GM12878 (cell line): ENCODE measurements at regions of chr2 and their contacts with region 1.

Region 1: DNA sequence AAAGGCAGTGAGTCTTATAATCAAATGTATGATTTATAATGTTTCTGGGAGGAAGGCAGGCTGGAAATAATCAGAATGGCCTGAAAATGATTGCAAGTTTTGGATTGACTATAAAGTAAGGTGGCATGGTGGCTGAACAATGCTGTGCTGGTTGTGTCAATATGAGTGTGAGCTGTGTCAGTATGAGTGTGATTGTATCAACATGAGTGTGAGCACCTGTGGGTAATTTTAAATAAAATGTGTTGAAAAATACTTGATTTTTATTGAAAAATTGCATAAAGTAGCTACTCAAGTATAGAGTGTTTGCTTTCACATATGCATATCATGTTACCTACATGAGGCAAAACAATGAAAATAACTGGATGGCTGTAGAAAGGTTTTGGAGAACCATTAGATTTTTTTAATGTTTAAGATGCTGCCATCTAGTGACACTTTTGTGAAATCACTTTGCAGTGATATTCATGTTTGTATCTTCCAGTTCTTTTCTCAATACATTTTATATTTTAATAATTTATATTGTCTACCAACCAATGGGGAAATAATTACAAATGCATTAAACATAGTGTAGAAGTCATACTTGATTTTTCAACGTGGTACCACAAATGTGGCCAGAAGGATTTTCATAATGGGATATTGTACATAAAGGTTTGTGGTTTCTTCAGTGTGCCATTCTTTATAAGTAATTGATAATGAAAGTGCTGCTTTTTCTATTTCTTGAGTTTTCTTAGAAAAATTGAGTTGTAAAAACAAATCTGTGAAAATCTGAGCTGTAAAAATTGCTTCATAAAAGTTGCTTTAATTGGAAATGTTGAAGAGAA is 103.3 kb downstream of the KYNU start:
- DNase-seq: no peak
- ATAC-seq: peak; percentile 58
- H3K4me3 ChIP-seq: no peak overlapping the region
- H3K27ac ChIP-seq: no peak overlapping the region
- H3K4me1 ChIP-seq: peaks cover 19% of the 10 kb centered on the region
- H3K27me3 ChIP-seq: no peaks in the 10 kb centered on the region
- CTCF ChIP-seq: peak; percentile 42 to 66 (median 43); a peak in 5 of 6 replicates
- EP300 ChIP-seq: no peak
- POLR2A ChIP-seq: no peak
- RAD21 ChIP-seq: peak; percentile 68

Region 2: GRCh38 chr2:142682528-142682927 is 298.2 kb before region 1 on chr2:
- CTCF ChIA-PET with region 1: interaction called, 41 read pairs
- POLR2A ChIA-PET with region 1: no interaction called
- RAD21 ChIA-PET with region 1: interaction called, 11 read pairs
- SMC1A ChIA-PET with region 1: interaction called, 22 read pairs
- in situ Hi-C with region 1: no loop called
- intact Hi-C with region 1: loop called (anchors 2 kb)
- DNase-seq: no peak
- ATAC-seq: peak; percentile 39; the same call in 2 of the 3 replicates
- H3K4me3 ChIP-seq: no peak overlapping the region
- H3K27ac ChIP-seq: no peak overlapping the region
- H3K4me1 ChIP-seq: no peaks in the 10 kb centered on the region
- H3K27me3 ChIP-seq: peaks cover 0 to 4% of the 10 kb centered on the region in 2 experiments; a peak in 1 of 4 replicates
- CTCF ChIP-seq: peak in 1 of 3 experiments; percentile 36; a peak in 1 of 6 replicates
- EP300 ChIP-seq: no peak
- POLR2A ChIP-seq: no peak
- RAD21 ChIP-seq: peak; percentile 79

Region 3: DNA sequence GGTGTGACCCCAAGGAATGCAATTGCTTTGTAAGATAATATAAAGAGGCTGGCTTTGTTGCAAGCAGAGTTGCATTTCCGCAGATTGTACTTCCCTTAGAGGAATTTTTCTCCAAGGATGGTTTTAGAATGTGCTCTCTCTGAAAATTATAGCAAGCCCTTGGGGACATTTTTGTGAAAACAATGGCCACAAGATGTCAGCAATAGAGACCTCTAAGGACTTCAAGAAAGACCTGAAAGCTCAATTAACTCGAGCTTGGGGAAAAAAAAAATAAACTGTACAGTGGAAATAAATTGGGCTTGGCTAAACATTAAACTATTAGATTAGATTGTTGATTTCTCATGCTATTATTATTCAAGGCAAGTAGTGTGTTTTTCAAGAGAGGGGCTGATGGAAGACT is 184.6 kb before region 1 on chr2:
- CTCF ChIA-PET with region 1: interaction called, 56 read pairs
- POLR2A ChIA-PET with region 1: no interaction called
- RAD21 ChIA-PET with region 1: interaction called, 21 read pairs
- SMC1A ChIA-PET with region 1: interaction called, 47 read pairs
- in situ Hi-C with region 1: no loop called
- intact Hi-C with region 1: loop called (anchors 2 kb)
- DNase-seq: no peak
- ATAC-seq: peak; percentile 30; the same call in 1 of the 3 replicates
- H3K4me3 ChIP-seq: no peak overlapping the region
- H3K27ac ChIP-seq: no peak overlapping the region
- H3K4me1 ChIP-seq: no peaks in the 10 kb centered on the region
- H3K27me3 ChIP-seq: no peaks in the 10 kb centered on the region
- CTCF ChIP-seq: peak in 1 of 3 experiments; percentile 27; a peak in 2 of 6 replicates
- EP300 ChIP-seq: no peak
- POLR2A ChIP-seq: no peak
- RAD21 ChIP-seq: 0 out of 2 replicates have a peak, but pooled peaks have one; percentile 12

Region 4: GRCh38 chr2:142868281-142868762 is 112.4 kb before region 1 on chr2:
- CTCF ChIA-PET with region 1: interaction called, 18 read pairs
- POLR2A ChIA-PET with region 1: no interaction called
- RAD21 ChIA-PET with region 1: interaction called, 5 read pairs
- SMC1A ChIA-PET with region 1: interaction called, 23 read pairs
- in situ Hi-C with region 1: no loop called
- intact Hi-C with region 1: no loop called
- DNase-seq: no peak
- ATAC-seq: peak; percentile 39
- H3K4me3 ChIP-seq: no peak overlapping the region
- H3K27ac ChIP-seq: peak overlapping the region; percentile 56
- H3K4me1 ChIP-seq: peaks cover 19% of the 10 kb centered on the region
- H3K27me3 ChIP-seq: no peaks in the 10 kb centered on the region
- CTCF ChIP-seq: no peak
- EP300 ChIP-seq: 0 out of 4 replicates have a peak, but pooled peaks of 1 of the 2 experiments have one; percentile 6
- POLR2A ChIP-seq: no peak
- RAD21 ChIP-seq: no peak

Region 5: GRCh38 chr2:142892715-142893114 is 88.1 kb before region 1 on chr2:
- CTCF ChIA-PET with region 1: interaction called, 5 read pairs
- POLR2A ChIA-PET with region 1: no interaction called
- RAD21 ChIA-PET with region 1: no interaction called
- SMC1A ChIA-PET with region 1: interaction called, 10 read pairs
- in situ Hi-C with region 1: no loop called
- intact Hi-C with region 1: no loop called
- DNase-seq: peak; percentile 79
- ATAC-seq: peak; percentile 98
- H3K4me3 ChIP-seq: no peak overlapping the region
- H3K27ac ChIP-seq: peak overlapping the region; percentile 48; the same call in 1 of the 2 replicates
- H3K4me1 ChIP-seq: peaks cover 14% of the 10 kb centered on the region; the same call in 1 of the 2 replicates
- H3K27me3 ChIP-seq: no peaks in the 10 kb centered on the region
- CTCF ChIP-seq: no peak
- EP300 ChIP-seq: peak; percentile 55 to 92; a peak in 3 of 4 replicates
- POLR2A ChIP-seq: no peak
- RAD21 ChIP-seq: no peak

Region 6: DNA sequence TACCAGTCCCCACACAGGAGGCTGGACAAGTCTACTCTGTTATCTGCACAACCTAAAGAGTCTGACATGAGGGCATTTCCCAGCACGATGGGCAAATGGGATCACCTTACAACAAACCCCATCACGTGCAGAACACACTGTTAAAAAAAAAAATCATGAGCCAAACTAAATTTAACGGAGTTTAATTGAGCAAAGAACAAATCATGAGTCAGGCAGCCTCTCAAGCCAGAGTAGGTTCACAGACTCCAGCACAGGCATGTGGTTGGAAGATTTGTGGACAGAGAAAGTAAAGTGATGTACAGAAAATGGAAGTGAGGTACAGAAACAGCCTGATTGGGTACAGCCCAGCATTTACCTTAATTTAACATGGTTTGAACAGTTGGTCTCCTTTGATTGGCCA is 43.4 kb before region 1 on chr2:
- CTCF ChIA-PET with region 1: interaction called, 10 read pairs
- POLR2A ChIA-PET with region 1: no interaction called
- RAD21 ChIA-PET with region 1: interaction called, 9 read pairs
- SMC1A ChIA-PET with region 1: interaction called, 6 read pairs
- in situ Hi-C with region 1: no loop called
- intact Hi-C with region 1: no loop called
- DNase-seq: no peak
- ATAC-seq: peak; percentile 22; the same call in 2 of the 3 replicates
- H3K4me3 ChIP-seq: no peak overlapping the region
- H3K27ac ChIP-seq: no peak overlapping the region
- H3K4me1 ChIP-seq: no peaks in the 10 kb centered on the region
- H3K27me3 ChIP-seq: no peaks in the 10 kb centered on the region
- CTCF ChIP-seq: no peak
- EP300 ChIP-seq: no peak
- POLR2A ChIP-seq: no peak
- RAD21 ChIP-seq: no peak

Region 7: DNA sequence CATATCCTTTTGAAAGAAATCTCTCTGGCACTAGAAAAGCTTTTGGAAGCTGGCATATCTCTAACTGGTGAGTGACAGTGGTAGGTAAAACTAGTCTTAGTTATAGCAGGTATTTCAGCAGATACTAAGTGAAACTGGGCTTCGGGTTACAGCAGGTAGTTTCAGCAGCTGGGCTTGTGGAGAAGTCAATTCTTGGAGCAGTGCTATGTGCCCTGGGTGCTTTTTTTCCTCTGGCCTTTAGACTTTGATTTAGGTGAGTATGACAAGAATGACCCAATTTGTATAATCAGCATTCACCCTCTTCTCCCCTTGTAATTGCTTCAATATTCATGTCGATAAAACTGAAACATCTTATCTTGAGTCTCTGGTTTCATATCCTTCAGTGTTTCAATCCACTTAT is 19.8 kb after region 1 on chr2:
- CTCF ChIA-PET with region 1: interaction called, 124 read pairs
- POLR2A ChIA-PET with region 1: no interaction called
- RAD21 ChIA-PET with region 1: no interaction called
- SMC1A ChIA-PET with region 1: interaction called, 5 read pairs
- in situ Hi-C with region 1: no loop called
- intact Hi-C with region 1: no loop called
- DNase-seq: no peak
- ATAC-seq: no peak
- H3K4me3 ChIP-seq: no peak overlapping the region
- H3K27ac ChIP-seq: no peak overlapping the region
- H3K4me1 ChIP-seq: no peaks in the 10 kb centered on the region
- H3K27me3 ChIP-seq: no peaks in the 10 kb centered on the region
- CTCF ChIP-seq: no peak
- EP300 ChIP-seq: no peak
- POLR2A ChIP-seq: no peak
- RAD21 ChIP-seq: no peak

Region 8: DNA sequence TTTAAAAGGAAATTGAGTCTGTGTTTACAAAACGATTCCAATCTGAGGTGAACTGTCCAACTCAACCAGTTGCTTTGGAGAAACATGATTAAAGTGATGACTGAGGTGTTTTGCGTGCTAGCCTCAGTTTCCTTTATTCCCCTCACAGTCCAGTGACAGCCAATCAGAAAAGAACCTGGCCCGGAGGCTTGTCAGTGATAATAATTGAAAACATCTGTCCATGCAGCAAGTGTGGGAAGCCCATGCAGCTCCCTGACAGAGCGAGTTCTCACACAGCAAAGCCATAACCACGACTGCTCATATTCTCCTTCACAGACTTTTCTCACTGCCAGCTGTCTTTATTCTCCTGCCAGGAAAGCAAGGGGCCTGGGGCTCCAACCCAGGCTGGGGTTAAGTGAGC is 761.8 kb after region 1 on chr2:
- CTCF ChIA-PET with region 1: no interaction called
- POLR2A ChIA-PET with region 1: no interaction called
- RAD21 ChIA-PET with region 1: no interaction called
- SMC1A ChIA-PET with region 1: no interaction called
- in situ Hi-C with region 1: no loop called
- intact Hi-C with region 1: no loop called
- DNase-seq: no peak
- ATAC-seq: no peak
- H3K4me3 ChIP-seq: no peak overlapping the region
- H3K27ac ChIP-seq: no peak overlapping the region
- H3K4me1 ChIP-seq: no peaks in the 10 kb centered on the region
- H3K27me3 ChIP-seq: no peaks in the 10 kb centered on the region
- CTCF ChIP-seq: no peak
- EP300 ChIP-seq: no peak
- POLR2A ChIP-seq: no peak
- RAD21 ChIP-seq: no peak

Region 9: DNA sequence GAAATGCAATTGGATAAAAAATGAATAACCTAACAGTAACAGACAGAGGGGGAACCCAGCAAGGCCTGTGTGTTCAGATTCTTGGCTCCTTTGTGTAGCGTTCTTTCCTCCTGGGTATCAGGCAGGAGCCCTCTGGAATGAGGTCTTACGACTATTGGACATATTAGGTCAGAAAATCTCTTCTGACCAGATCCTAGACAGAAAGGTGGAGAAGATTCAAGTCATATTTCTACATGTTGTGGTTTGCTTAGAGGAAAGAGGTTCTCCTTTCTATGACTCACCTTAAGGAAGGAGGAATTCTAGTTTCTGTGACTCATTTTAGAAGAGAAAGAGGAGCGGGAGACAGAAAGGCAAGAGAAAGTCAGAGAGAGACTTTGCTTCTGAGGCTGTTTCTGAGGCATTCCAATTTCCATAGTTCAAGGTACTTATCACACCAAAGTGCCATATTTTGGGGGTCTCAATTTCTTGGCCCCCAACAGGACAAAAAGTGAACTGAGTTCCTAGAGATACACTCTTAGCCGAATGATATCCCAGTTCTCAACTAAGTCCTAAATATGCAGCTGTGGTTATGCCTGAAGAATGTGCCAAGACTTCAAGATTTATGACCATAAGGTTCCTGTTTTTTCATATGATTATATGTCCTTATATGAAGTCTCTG is 920.5 kb after region 1 on chr2:
- CTCF ChIA-PET with region 1: no interaction called
- POLR2A ChIA-PET with region 1: no interaction called
- RAD21 ChIA-PET with region 1: no interaction called
- SMC1A ChIA-PET with region 1: no interaction called
- in situ Hi-C with region 1: no loop called
- intact Hi-C with region 1: no loop called
- DNase-seq: no peak
- ATAC-seq: peak; percentile 22
- H3K4me3 ChIP-seq: no peak overlapping the region
- H3K27ac ChIP-seq: no peak overlapping the region
- H3K4me1 ChIP-seq: no peaks in the 10 kb centered on the region
- H3K27me3 ChIP-seq: no peaks in the 10 kb centered on the region
- CTCF ChIP-seq: no peak
- EP300 ChIP-seq: no peak
- POLR2A ChIP-seq: no peak
- RAD21 ChIP-seq: no peak